ENCODE measurements at regions of chr10 and their contacts with region 1.

Region 1: DNA sequence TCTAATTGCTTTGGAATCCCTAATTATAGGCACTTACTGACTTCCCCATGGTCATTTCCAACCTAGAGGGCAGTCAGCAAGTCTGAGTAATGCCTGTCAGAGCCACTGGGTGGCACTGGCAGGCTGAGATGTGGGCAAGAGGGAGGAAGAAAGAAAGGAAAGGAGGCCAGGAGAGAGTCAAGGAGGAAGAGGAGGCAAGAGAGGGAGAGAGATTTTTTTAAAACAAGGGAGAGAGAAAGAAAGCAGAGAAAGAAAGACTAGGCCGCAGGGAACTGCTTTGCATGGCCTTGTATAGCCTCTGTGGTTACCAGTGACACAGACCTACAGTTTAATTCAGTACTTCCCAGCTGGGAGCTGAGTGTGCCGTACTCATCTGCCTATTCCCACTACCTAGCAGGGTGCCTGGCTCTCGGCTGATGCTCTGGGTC is 210.4 kb upstream of the ADO start:
- DNase-seq: no peak
- H3K4me3 ChIP-seq: no peak overlapping the region
- H3K27ac ChIP-seq: no peak overlapping the region
- H3K4me1 ChIP-seq: peaks cover 0 to 5% (median 0%) of the 10 kb centered on the region in 4 donors
- H3K27me3 ChIP-seq: no peaks in the 10 kb centered on the region
- CTCF ChIP-seq: peak; percentile 77 to 88 (median 88)
- EP300 ChIP-seq: no peak
- POLR2A ChIP-seq: no peak

Region 2: GRCh38 chr10:62443866-62444265 is 150.2 kb before region 1 on chr10:
- intact Hi-C with region 1: loop called (anchors 10 kb)
- DNase-seq: no peak
- H3K4me3 ChIP-seq: no peak overlapping the region
- H3K27ac ChIP-seq: no peak overlapping the region
- H3K4me1 ChIP-seq: peaks cover 3 to 24% (median 14%) of the 10 kb centered on the region in 4 donors
- H3K27me3 ChIP-seq: no peaks in the 10 kb centered on the region
- CTCF ChIP-seq: no peak
- EP300 ChIP-seq: no peak
- POLR2A ChIP-seq: no peak

Region 3: DNA sequence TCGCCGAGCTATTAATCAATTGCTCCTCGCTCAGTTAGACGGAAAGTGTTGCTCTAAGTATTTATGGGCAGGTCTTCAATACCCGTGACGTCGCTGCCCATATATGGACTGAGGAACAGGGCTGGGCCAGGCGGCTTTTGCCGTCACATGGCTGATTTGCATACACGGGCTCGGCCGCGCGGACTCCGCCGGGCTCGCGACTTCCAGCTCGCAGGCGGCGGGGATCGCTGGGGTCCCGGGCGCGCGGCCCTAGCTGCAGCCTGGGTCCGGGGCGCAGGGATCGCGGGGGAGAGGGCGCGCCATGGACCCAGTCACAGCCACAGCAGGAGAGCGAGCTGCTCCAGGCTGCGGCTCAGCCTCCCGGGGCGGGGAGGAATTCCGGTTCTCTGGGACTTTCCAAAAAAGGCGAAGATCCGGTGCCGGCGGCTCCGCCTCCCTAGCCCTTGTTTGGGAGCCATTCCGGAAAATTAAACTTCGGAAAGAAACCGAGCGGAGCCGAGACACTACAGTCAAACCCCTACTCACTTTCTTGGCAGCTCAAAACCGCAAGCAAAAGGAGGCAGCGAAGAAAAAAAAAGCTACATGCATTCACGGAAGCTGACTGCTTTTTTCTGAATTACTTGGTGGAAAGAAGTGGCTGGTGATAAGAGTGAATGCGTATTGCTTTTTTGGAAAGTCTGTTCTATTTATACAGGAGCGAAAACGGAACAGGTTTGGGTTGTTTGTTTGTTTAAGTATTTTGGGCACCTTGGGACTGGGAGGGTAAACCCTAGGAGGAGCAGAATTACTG is 222.4 kb after region 1 on chr10 and contains the start of gene EGR2:
- intact Hi-C with region 1: loop called (anchors 5 kb)
- DNase-seq: peak; percentile 99
- H3K4me3 ChIP-seq: peak within 1 kb of the TSS; percentile 67 to 100 (median 76)
- H3K27ac ChIP-seq: peak within 1 kb of the TSS; percentile 83 to 93 (median 85)
- H3K4me1 ChIP-seq: peaks cover 32 to 46% (median 42%) of the 10 kb centered on the region in 4 donors
- H3K27me3 ChIP-seq: peaks cover 0 to 48% (median 16%) of the 10 kb centered on the region in 4 donors
- CTCF ChIP-seq: no peak
- EP300 ChIP-seq: no peak
- POLR2A ChIP-seq: no peak
- total RNA-seq, gene EGR2: 0.26 to 4.0 (median 1.5) TPM

Region 4: GRCh38 chr10:63157845-63158624 is 563.9 kb after region 1 on chr10:
- intact Hi-C with region 1: loop called (anchors 2 kb)
- DNase-seq: peak; percentile 3
- H3K4me3 ChIP-seq: no peak overlapping the region
- H3K27ac ChIP-seq: no peak overlapping the region
- H3K4me1 ChIP-seq: peaks cover 0 to 33% (median 25%) of the 10 kb centered on the region in 4 donors
- H3K27me3 ChIP-seq: no peaks in the 10 kb centered on the region
- CTCF ChIP-seq: peak; percentile 72 to 80 (median 74)
- EP300 ChIP-seq: no peak
- POLR2A ChIP-seq: no peak